ENCODE measurements at regions of chr19 and their contacts with region 1.

Region 1: GRCh38 chr19:10292206-10292788 is 2.5 kb downstream of the ICAM5 start:
- DNase-seq: no peak
- ATAC-seq: peak; percentile 63
- H3K4me3 ChIP-seq: peak overlapping the region; percentile 53 to 79
- H3K27ac ChIP-seq: peak overlapping the region; percentile 63
- H3K4me1 ChIP-seq: peaks cover 4% of the 10 kb centered on the region; the same call in 1 of the 2 replicates
- H3K27me3 ChIP-seq: no peaks in the 10 kb centered on the region
- CTCF ChIP-seq: no peak

Region 2: GRCh38 chr19:10269333-10270179 is 22.7 kb before region 1 on chr19:
- CTCF ChIA-PET with region 1: interaction called, 5 read pairs
- POLR2A ChIA-PET with region 1: interaction called, 11 read pairs
- in situ Hi-C with region 1: no loop called
- intact Hi-C with region 1: no loop called
- DNase-seq: peak; percentile 33
- ATAC-seq: peak; percentile 70
- H3K4me3 ChIP-seq: peak overlapping the region; percentile 55 to 83
- H3K27ac ChIP-seq: peak overlapping the region; percentile 91
- H3K4me1 ChIP-seq: peaks cover 4% of the 10 kb centered on the region
- H3K27me3 ChIP-seq: no peaks in the 10 kb centered on the region
- CTCF ChIP-seq: peak; percentile 96

Region 3: GRCh38 chr19:10315335-10316214 is 23.3 kb after region 1 on chr19 and contains the start of gene FDX2:
- CTCF ChIA-PET with region 1: no interaction called
- POLR2A ChIA-PET with region 1: interaction called, 12 read pairs
- in situ Hi-C with region 1: no loop called
- intact Hi-C with region 1: no loop called
- DNase-seq: no peak
- ATAC-seq: peak; percentile 87
- H3K4me3 ChIP-seq: peak within 1 kb of the TSS; percentile 61 to 78
- H3K27ac ChIP-seq: peak within 1 kb of the TSS; percentile 86
- H3K4me1 ChIP-seq: peaks cover 6% of the 10 kb centered on the region
- H3K27me3 ChIP-seq: no peaks in the 10 kb centered on the region
- CTCF ChIP-seq: no peak
- total RNA-seq, gene FDX2: 25.5 TPM

Region 4: DNA sequence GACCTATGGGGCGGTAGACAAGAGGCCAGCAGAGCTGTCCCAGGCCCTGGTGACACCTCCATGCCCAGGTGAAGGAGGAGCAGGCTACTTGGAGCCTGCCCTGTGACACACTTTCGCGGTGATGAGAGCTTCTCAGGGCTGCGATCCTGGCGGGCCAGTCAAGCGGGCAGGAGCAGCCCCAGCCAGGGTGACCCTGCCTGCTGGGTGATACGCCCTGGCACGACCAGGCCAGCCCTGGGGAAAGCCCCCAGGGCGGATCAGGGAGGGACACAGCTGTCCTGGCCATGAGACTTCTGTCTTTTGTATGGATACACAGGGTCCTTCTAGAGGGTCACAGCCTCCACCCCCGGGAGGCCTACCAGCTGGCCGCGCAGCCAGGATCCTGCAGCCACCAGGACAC is 438.6 kb after region 1 on chr19:
- CTCF ChIA-PET with region 1: no interaction called
- POLR2A ChIA-PET with region 1: no interaction called
- in situ Hi-C with region 1: no loop called
- intact Hi-C with region 1: no loop called
- DNase-seq: no peak
- ATAC-seq: 0 out of 2 replicates have a peak, but pooled peaks have one; percentile 43
- H3K4me3 ChIP-seq: no peak overlapping the region
- H3K27ac ChIP-seq: no peak overlapping the region
- H3K4me1 ChIP-seq: no peaks in the 10 kb centered on the region
- H3K27me3 ChIP-seq: no peaks in the 10 kb centered on the region
- CTCF ChIP-seq: no peak

Measured in Panc1 (cell line).